H1 (cell line): ENCODE measurements at regions of chr6 and their contacts with region 1.

Region 1: GRCh38 chr6:13814176-13814937 is at the start of gene MCUR1:
- DNase-seq: peak; percentile 50 to 83
- H3K4me3 ChIP-seq: peak within 1 kb of the TSS; percentile 67 to 89 (median 70)
- H3K27ac ChIP-seq: peak within 1 kb of the TSS; percentile 91
- H3K4me1 ChIP-seq: peaks cover 0 to 7% (median 4%) of the 10 kb centered on the region in 4 experiments; a peak in 4 of 7 replicates
- H3K27me3 ChIP-seq: no peaks in the 10 kb centered on the region
- CTCF ChIP-seq: peak in 2 of 3 experiments; percentile 18 to 30; a peak in 3 of 4 replicates
- EP300 ChIP-seq: no peak; a peak in 1 of 3 replicates
- POLR2A ChIP-seq: peak in 1 of 2 experiments; percentile 59; a peak in 2 of 3 replicates
- RAD21 ChIP-seq: 0 out of 4 replicates have a peak, but pooled peaks of 1 of the 2 experiments have one; percentile 6
- total RNA-seq, gene MCUR1: 35.9 and 37.3 TPM in 2 replicates

Region 2: GRCh38 chr6:12875051-12875450 is 939.3 kb before region 1 on chr6:
- CTCF ChIA-PET with region 1: no interaction called
- POLR2A ChIA-PET with region 1: no interaction called
- DNase-seq: no peak
- H3K4me3 ChIP-seq: no peak overlapping the region
- H3K27ac ChIP-seq: no peak overlapping the region
- H3K4me1 ChIP-seq: peaks cover 0 to 6% (median 2%) of the 10 kb centered on the region in 4 experiments; a peak in 2 of 7 replicates
- H3K27me3 ChIP-seq: no peaks in the 10 kb centered on the region
- CTCF ChIP-seq: no peak
- EP300 ChIP-seq: no peak
- POLR2A ChIP-seq: no peak
- RAD21 ChIP-seq: no peak

Region 3: DNA sequence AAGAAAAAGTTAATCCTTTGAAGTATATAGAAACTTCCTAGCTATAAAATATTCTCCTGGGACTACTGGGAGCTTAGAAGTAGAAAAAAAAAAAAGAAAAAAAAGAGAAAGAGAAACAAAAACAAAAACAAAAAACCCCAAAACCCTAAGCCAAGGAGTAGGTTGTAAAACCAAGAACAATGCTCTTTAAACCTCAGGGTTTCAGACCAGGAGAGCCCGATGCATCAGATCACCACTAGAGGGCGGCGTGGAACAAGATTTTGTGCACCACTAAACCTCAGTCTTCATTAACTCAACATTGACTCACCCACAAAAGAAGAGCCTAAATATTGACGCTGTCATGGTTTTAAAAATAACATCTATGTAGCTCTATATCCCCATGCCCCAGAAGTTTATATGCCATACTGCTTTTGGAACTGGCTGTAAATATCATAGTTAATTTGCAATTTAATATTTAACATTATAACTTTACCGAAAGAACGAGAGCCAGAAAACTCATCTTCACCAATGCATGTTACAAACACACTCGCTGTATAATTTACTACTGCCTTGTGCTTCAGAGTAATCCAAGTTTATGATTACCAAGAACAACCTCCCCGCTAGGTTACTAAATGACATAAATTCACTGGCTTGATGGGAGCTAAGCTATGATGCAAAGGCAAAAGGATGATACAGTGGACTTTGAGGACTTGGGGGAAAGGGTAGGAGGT is 19.2 kb before region 1 on chr6:
- CTCF ChIA-PET with region 1: interaction called, 41 read pairs
- POLR2A ChIA-PET with region 1: interaction called, 3 read pairs
- DNase-seq: peak in 1 of 2 experiments; percentile 91
- H3K4me3 ChIP-seq: no peak overlapping the region
- H3K27ac ChIP-seq: no peak overlapping the region
- H3K4me1 ChIP-seq: no peaks in the 10 kb centered on the region
- H3K27me3 ChIP-seq: no peaks in the 10 kb centered on the region
- CTCF ChIP-seq: peak; percentile 72 to 94 (median 76)
- EP300 ChIP-seq: no peak
- POLR2A ChIP-seq: no peak
- RAD21 ChIP-seq: peak; percentile 84 to 90

Region 4: DNA sequence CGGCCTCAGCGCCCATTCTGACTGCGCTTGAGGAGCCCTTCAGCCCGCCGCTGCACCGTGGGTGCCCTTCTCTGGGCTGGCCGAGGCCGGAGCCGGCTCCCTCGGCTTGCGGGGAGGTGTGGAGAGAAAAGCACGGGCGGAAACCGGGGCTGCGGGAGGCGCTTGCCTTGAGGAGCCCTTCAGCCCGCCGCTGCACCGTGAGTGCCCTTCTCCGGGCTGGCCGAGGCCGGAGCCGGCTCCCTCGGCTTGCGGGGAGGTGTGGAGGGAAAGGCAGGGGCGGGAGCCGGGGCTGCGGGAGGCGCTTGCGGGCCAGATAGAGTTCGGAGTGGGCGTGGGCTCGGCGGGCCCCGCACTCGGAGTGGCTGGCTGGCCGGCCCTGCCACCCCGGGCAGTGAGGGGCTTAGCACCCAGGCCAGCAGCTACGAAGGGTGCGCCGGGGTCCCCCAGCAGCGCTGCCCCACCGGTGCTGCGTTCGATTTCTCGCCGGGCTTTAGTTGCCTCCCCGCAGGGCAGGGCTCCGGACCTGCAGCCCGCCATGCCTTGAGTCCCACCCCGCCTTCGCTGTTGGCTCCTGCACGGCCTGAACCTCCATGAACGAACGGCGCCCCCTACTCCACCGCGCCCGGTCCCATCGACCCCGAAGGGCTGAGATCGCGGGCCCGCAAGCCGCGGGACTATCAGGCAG is 45.7 kb after region 1 on chr6:
- CTCF ChIA-PET with region 1: interaction called, 4 read pairs
- POLR2A ChIA-PET with region 1: interaction called, 12 read pairs
- DNase-seq: no peak
- H3K4me3 ChIP-seq: peak overlapping the region in 2 of 4 experiments; percentile 36 to 44; a peak in 3 of 8 replicates
- H3K27ac ChIP-seq: no peak overlapping the region
- H3K4me1 ChIP-seq: no peaks in the 10 kb centered on the region
- H3K27me3 ChIP-seq: no peaks in the 10 kb centered on the region
- CTCF ChIP-seq: no peak
- EP300 ChIP-seq: no peak
- POLR2A ChIP-seq: no peak
- RAD21 ChIP-seq: no peak

Region 5: DNA sequence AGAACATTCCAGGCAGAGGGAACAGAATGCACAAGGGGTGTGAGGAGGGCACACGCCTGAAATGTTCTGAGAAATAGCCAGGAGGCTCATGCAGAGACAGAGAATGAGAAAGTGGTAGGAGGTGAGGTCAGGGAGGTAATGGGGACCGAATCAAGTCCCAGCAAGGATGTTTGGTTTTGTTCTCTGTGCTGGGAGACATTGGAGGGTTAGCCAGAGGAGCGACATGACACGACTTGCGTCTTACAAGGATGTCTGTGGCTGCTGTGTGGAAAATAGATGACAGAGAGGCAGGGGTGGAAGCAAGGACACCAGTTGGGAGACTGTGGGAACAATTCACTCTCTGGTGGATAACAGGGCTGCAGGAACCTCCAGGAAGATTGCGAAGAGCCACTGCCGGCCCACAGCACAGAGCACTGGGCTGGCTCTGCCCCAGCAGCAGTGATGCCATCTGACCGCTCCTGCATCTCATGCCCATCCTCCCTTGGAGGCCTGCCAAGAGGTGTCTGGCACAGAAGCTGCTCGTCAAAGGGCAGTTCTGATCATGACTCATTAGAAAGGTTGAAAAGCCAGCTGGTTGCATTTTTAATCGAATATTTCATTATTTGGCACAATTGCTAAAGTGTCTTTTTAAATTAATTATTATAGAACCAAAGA is 245.6 kb after region 1 on chr6:
- CTCF ChIA-PET with region 1: no interaction called
- POLR2A ChIA-PET with region 1: no interaction called
- DNase-seq: no peak
- H3K4me3 ChIP-seq: no peak overlapping the region
- H3K27ac ChIP-seq: no peak overlapping the region
- H3K4me1 ChIP-seq: peaks cover 0 to 3% (median 0%) of the 10 kb centered on the region in 4 experiments; a peak in 1 of 7 replicates
- H3K27me3 ChIP-seq: no peaks in the 10 kb centered on the region; a peak in 1 of 7 replicates
- CTCF ChIP-seq: no peak
- EP300 ChIP-seq: no peak
- POLR2A ChIP-seq: no peak
- RAD21 ChIP-seq: no peak